ENCODE measurements at regions of chr11 and their contacts with region 1.

Region 1: DNA sequence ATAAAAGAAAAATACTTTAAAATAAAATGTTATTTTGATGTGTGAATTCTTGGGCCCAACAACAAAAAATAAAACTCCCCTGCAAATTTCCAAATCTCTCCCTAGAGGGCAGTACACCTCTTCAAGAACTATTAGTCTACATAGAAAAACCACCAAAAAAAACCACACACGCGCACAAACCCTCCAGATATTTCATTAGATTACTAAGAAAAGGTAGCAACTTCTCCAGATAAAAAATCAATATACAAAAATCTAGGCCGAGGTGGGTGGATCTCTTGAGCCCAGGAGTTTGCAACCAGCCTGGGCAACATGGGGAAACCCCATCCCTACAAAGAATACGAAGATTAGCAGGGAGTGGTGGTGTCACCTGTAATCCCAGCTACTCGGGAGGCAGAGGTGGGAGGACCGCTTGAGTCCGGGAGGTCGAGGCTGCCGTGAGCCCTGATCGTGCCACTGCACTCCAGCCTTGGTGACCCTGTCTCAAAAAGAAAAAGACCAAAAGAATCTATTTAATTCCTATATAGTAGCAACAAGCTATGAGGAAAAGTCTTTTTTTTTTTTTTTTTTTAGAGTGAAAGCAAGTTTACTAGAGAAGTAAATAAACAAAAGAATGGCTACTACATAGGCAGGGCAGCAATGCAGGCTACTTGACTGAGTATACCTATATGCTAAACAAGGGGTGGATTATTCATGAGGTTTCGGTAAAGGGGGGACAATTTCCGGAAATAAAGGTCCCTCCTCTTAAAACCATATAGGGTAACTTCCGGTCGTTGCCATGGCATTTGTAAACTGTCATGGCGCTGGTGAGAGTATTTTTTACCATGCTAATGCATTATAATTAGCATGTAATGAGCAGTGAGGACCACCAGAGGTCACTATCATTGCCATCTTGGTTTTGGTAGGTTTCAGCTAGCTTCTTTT is 13.1 kb downstream of the B3GNT6 start:
- DNase-seq: peak; percentile 88
- H3K4me3 Mint-ChIP-seq: peak overlapping the region; percentile 52
- H3K27ac Mint-ChIP-seq: peak overlapping the region; percentile 64
- H3K4me1 Mint-ChIP-seq: peaks cover 8% of the 10 kb centered on the region
- H3K27me3 Mint-ChIP-seq: peaks cover 3% of the 10 kb centered on the region

Region 2: DNA sequence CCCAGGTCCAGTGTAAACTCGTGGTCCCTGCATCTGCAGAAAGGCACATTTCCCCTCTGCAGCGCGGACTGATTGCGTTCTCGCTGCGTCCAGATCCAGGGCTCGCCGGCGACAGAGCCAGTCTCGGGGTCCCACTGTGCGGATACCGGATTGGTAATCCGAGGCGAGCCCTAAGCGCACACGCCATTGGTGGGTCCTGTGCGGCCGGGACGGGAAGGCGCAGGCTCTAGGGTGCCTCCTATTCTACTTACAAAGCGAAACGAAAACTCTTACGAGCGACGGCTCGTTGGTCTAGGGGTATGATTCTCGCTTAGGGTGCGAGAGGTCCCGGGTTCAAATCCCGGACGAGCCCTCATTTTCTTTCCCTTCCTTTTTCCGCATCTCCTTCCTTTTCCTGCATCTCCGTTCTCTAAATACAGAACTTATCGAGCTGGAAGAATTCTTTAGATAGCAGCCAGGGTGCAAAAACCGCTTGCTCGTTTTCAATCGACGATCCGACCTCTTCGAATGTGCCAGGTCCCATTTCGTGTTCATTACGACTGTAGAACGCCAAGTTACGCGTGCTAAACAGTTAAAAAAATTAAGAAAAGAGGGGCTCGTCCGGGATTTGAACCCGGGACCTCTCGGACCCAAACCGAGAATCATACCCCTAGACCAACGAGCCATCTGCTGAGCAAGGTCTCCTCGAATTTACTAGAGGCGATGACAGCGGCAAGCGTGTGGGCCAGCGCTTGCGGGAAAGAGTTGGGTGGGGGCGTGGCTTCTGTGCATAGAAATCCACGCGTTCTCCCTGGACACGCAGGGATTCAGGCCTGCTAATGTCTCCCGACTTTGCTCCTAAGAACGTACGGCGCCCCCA is 811.8 kb before region 1 on chr11:
- CTCF ChIA-PET with region 1: no interaction called
- intact Hi-C with region 1: loop called (anchors 5 kb)
- DNase-seq: peak; percentile 96
- H3K4me3 Mint-ChIP-seq: peak overlapping the region; percentile 84
- H3K27ac Mint-ChIP-seq: peak overlapping the region; percentile 93
- H3K4me1 Mint-ChIP-seq: peaks cover 44% of the 10 kb centered on the region
- H3K27me3 Mint-ChIP-seq: peaks cover 3% of the 10 kb centered on the region

Region 3: DNA sequence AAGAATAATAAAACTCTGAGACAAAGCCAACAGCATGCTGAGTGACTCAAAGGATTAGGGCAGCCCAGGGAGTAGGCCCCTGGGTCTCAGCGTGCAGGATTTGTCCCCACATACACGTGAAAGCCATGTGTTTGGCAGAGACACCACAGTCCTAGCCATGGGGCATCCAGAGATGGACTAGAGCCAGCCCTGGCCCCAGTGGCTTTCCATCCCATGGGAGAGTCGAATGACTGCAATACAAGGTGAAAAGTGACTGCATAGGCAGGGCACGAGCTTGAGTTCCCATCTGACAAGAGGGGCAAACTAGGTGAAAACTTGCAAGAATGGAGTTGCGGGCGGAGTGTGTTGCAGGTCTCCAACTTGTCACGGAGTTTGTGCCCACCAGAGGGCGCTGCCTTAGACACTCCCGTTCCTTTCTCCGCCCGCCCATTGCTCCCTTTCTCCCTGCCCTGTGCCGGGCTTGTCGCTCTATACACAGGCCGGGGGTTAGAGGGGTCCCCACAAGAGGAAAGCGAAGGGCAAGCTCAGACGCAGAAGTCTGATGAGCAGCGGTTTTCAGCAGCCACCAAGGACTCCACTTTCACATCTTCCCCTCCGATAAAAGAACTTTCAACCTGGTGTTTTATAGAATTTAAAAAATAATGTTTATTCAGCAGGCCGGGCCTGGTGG is 239.9 kb before region 1 on chr11:
- CTCF ChIA-PET with region 1: interaction called, 3 read pairs
- intact Hi-C with region 1: loop called (anchors 1 kb)
- DNase-seq: peak; percentile 86
- H3K4me3 Mint-ChIP-seq: no peak overlapping the region
- H3K27ac Mint-ChIP-seq: no peak overlapping the region
- H3K4me1 Mint-ChIP-seq: peaks cover 26% of the 10 kb centered on the region
- H3K27me3 Mint-ChIP-seq: peaks cover 7% of the 10 kb centered on the region

Region 4: GRCh38 chr11:76919887-76920746 is 127.2 kb before region 1 on chr11:
- CTCF ChIA-PET with region 1: interaction called, 29 read pairs
- intact Hi-C with region 1: loop called (anchors 1 kb)
- DNase-seq: peak; percentile 76
- H3K4me3 Mint-ChIP-seq: peak overlapping the region; percentile 52
- H3K27ac Mint-ChIP-seq: no peak overlapping the region
- H3K4me1 Mint-ChIP-seq: peaks cover 6% of the 10 kb centered on the region
- H3K27me3 Mint-ChIP-seq: no peaks in the 10 kb centered on the region

Region 5: GRCh38 chr11:77091146-77091940 is 44.1 kb after region 1 on chr11:
- CTCF ChIA-PET with region 1: interaction called, 81 read pairs
- intact Hi-C with region 1: loop called (anchors 1 kb)
- DNase-seq: peak; percentile 89
- H3K4me3 Mint-ChIP-seq: no peak overlapping the region
- H3K27ac Mint-ChIP-seq: no peak overlapping the region
- H3K4me1 Mint-ChIP-seq: peaks cover 5% of the 10 kb centered on the region
- H3K27me3 Mint-ChIP-seq: no peaks in the 10 kb centered on the region

Region 6: GRCh38 chr11:77127232-77127911 is 80.1 kb after region 1 on chr11:
- CTCF ChIA-PET with region 1: interaction called, 4 read pairs
- intact Hi-C with region 1: loop called (anchors 1 kb)
- DNase-seq: peak; percentile 64
- H3K4me3 Mint-ChIP-seq: peak overlapping the region; percentile 59
- H3K27ac Mint-ChIP-seq: no peak overlapping the region
- H3K4me1 Mint-ChIP-seq: peaks cover 6% of the 10 kb centered on the region
- H3K27me3 Mint-ChIP-seq: no peaks in the 10 kb centered on the region

Region 7: GRCh38 chr11:77287615-77288273 is 240.5 kb after region 1 on chr11:
- CTCF ChIA-PET with region 1: no interaction called
- intact Hi-C with region 1: no loop called
- DNase-seq: no peak
- H3K4me3 Mint-ChIP-seq: no peak overlapping the region
- H3K27ac Mint-ChIP-seq: no peak overlapping the region
- H3K4me1 Mint-ChIP-seq: no peaks in the 10 kb centered on the region
- H3K27me3 Mint-ChIP-seq: peaks cover 21% of the 10 kb centered on the region

Region 8: DNA sequence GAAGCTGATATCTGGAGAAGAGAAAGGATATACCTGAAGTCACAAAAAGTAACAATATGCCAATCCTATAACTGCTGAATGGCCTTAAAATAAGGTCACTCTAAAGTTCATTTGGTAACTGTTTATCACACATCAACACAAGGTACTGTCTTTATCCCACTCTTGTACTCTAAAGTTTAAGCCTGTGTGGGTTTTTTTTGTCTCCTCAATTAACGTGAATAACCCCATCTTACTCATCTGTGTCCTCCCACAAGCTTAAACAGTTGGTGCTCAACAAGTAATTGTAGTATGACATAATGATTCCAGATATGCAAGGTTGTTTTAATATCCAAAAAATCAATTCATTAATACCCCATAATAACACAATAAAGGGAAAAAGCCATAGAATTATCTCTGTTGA is 384.5 kb after region 1 on chr11:
- CTCF ChIA-PET with region 1: no interaction called
- intact Hi-C with region 1: no loop called
- DNase-seq: no peak
- H3K4me3 Mint-ChIP-seq: no peak overlapping the region
- H3K27ac Mint-ChIP-seq: no peak overlapping the region
- H3K4me1 Mint-ChIP-seq: no peaks in the 10 kb centered on the region
- H3K27me3 Mint-ChIP-seq: peaks cover 3% of the 10 kb centered on the region

Region 9: GRCh38 chr11:77473801-77474683 is 426.8 kb after region 1 on chr11 and contains the start of gene PAK1:
- CTCF ChIA-PET with region 1: interaction called, 3 read pairs
- intact Hi-C with region 1: loop called (anchors 1 kb)
- DNase-seq: peak; percentile 92
- H3K4me3 Mint-ChIP-seq: peak within 1 kb of the TSS; percentile 80
- H3K27ac Mint-ChIP-seq: peak within 1 kb of the TSS; percentile 74
- H3K4me1 Mint-ChIP-seq: peaks cover 13% of the 10 kb centered on the region
- H3K27me3 Mint-ChIP-seq: peaks cover 9% of the 10 kb centered on the region
- total RNA-seq, gene PAK1: 45.8 to 49.5 TPM

Measured in activated naive CD4-positive, alpha-beta T cell treated with anti-CD3 and anti-CD28 coated beads for 36 hours (primary cell).